Esophagus squamous epithelium (tissue), 5 donors: ENCODE measurements at regions of chr6 and their contacts with region 1.

Region 1: DNA sequence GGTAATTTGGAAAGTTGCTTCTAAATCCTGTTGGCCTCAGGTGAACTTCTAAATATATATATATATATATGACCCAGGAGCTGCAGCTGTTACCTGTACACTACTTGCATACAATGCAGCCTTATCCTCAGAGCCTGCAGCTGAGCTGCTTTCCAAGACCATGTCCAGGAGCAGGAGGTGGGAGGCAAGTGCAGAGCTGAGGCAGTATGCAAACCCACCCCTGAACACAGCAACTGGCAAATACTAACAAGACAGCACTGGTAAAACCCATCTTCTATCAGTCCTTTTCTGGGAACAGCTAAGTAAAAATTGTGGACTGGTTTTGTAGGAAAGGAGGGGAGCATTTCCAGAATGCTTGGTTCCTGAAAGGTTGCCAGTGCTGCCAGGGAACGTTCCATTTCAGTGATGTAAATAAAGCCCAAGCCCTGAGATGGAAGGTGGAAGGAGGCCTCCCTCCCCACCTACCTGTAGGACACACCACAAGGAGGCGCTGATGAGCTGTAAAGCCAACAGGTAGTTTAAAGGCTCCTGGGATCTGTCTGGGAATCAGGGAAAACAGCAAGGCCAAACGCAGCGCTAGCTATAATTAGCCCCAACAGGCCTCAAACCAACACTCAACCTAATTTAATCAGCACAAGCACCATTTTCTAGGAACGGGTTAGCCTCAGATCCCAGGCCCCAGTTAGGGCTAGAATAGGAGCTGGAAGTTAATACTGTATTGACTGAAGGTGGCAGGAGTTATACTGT is 93.8 kb upstream of the MAP7 start:
- DNase-seq: peak; percentile 3
- H3K4me3 ChIP-seq: no peak overlapping the region
- H3K27ac ChIP-seq: peak overlapping the region in 3 of 4 donors; percentile 53 to 69 (median 57)
- H3K4me1 ChIP-seq: peaks cover 4 to 40% (median 22%) of the 10 kb centered on the region in 3 donors
- H3K27me3 ChIP-seq: no peaks in the 10 kb centered on the region
- CTCF ChIP-seq: peak; percentile 73 to 97 (median 94)
- POLR2A ChIP-seq: no peak

Region 2: DNA sequence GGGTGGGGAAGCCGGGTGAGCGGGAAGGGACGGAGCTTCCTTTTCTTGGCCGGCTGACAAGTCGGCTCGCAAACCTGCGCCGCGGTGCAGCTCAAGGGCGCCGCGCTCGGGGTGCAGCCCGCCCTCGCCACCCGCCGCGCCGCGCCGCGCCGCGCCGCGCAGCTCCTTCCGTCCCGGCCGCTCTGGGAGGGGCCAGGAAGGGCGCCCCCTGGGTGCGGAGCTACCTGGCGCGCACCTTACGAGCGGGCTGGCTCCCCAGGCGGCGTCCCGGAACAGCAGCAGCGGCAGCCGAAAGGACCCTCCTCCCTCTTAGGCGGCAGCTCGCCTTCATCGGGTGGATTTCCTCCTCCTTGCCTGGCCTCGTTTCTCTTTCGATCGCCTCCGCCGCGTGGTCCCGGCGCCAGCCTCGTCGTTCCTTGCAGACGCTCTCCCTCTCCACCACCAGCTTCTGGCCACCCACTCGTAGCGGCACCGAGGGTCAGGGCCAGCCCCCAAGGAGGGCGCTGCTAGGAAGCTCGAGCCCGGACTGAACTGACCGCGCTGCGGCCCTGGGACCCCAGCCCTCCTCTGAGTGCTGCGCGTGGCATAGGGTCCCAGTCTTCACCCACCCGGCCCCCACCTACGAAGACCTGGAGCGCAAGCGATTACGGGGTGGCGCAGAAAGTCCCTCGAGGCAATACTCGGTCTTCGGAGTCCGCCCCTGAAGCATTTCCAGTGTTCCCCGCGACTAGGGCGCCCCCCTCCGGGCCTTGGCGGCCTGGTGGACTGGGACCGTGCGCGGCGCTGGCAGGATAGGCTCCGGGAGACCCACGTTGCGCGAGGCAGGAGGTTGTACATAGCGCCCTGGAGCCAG is 148.6 kb after region 1 on chr6 and contains the start of gene MAP3K5:
- intact Hi-C with region 1: loop called (anchors 2 kb)
- DNase-seq: peak; percentile 72
- H3K4me3 ChIP-seq: peak within 1 kb of the TSS; percentile 90 to 97 (median 96)
- H3K27ac ChIP-seq: peak within 1 kb of the TSS; percentile 92 to 96 (median 94)
- H3K4me1 ChIP-seq: peaks cover 7 to 47% (median 18%) of the 10 kb centered on the region in 3 donors
- H3K27me3 ChIP-seq: no peaks in the 10 kb centered on the region
- CTCF ChIP-seq: peak; percentile 75 to 95 (median 88)
- POLR2A ChIP-seq: peak in 3 of 4 donors; percentile 17 to 64 (median 46)
- total RNA-seq, gene MAP3K5: 9.2 to 22.9 (median 20.9) TPM

Region 3: GRCh38 chr6:136952714-136953260 is 308.8 kb after region 1 on chr6:
- intact Hi-C with region 1: no loop called
- DNase-seq: no peak
- H3K4me3 ChIP-seq: no peak overlapping the region
- H3K27ac ChIP-seq: no peak overlapping the region
- H3K4me1 ChIP-seq: no peaks in the 10 kb centered on the region
- H3K27me3 ChIP-seq: peaks cover 0 to under 1% (median 0%) of the 10 kb centered on the region in 4 donors
- CTCF ChIP-seq: no peak
- POLR2A ChIP-seq: no peak